ENCODE measurements at regions of chr7 and their contacts with region 1.

Region 1: GRCh38 chr7:1459522-1459892 is 237 bp upstream of the MICALL2 start:
- DNase-seq: peak; percentile 97 to 100
- H3K4me3 ChIP-seq: peak overlapping the region; percentile 89 to 95
- H3K27ac ChIP-seq: peak overlapping the region; percentile 85 to 95
- H3K4me1 ChIP-seq: peaks cover 16 to 44% of the 10 kb centered on the region in 2 donors
- H3K27me3 ChIP-seq: no peaks in the 10 kb centered on the region
- CTCF ChIP-seq: no peak

Region 2: DNA sequence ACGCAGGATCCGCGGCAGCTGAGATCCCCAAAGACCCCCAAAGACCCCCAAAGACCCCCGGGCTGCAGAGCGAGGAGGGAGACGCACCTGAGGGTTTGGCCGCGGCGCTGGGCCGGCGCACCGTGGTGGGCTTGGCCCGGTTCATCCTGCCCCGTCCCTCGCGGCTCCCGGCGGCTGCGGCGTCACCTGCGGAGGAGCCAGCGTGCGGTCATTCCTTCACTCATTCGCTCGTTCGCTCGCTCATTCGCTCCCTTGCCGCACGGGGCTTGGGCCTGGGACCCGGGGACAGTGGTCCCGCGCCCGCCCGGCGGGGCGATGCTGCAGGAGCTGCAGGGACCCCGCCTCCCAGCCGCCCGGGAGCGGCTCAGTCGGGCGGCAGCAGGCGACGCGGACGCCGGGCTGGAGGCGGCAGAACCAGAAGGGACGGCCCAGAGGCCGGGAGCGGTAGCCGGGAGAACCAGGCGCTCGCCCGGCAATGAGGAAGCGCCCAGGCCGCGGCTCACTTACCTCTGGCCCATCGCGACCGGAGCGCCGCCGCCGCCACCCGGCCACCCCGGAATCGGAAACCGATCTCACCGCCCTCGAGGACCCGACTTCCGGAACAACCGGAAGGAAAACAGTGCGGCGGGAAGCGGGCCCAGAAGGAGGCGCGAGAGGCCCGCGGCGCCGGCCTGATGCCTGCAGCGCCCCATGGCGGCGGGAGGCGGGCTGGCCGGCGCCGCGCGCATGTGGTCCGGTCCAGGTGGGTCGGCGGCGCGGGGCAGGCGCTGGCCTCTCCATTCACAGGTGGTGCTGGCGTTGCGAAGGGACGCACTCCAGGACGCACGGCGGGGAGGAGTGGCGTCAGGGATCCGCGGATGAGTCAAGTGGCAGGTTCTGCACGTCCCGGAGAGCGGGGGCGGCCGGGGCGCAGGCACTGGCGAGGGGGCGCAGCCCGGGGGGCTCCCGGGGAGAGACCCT is 44.6 kb after region 1 on chr7 and contains the start of gene INTS1:
- intact Hi-C with region 1: loop called (anchors 1 kb)
- DNase-seq: peak; percentile 42 to 93
- H3K4me3 ChIP-seq: peak within 1 kb of the TSS; percentile 79 to 93
- H3K27ac ChIP-seq: peak within 1 kb of the TSS; percentile 53 to 71
- H3K4me1 ChIP-seq: peaks cover 10% of the 10 kb centered on the region in 2 donors
- H3K27me3 ChIP-seq: no peaks in the 10 kb centered on the region
- CTCF ChIP-seq: peak; percentile 59 to 97 (median 71)
- total RNA-seq, gene INTS1: 80.7 TPM

Region 3: GRCh38 chr7:1532483-1533424 is 73.2 kb after region 1 on chr7:
- intact Hi-C with region 1: loop called (anchors 2 kb)
- DNase-seq: peak; percentile 88 to 96
- H3K4me3 ChIP-seq: peak overlapping the region; percentile 76 to 91
- H3K27ac ChIP-seq: peak overlapping the region; percentile 98 to 99
- H3K4me1 ChIP-seq: peaks cover 9 to 40% of the 10 kb centered on the region in 2 donors
- H3K27me3 ChIP-seq: no peaks in the 10 kb centered on the region
- CTCF ChIP-seq: no peak

Region 4: GRCh38 chr7:1537535-1538412 is 78.3 kb after region 1 on chr7:
- intact Hi-C with region 1: loop called (anchors 2 kb)
- DNase-seq: peak; percentile 90 to 99
- H3K4me3 ChIP-seq: peak overlapping the region; percentile 57 to 77
- H3K27ac ChIP-seq: peak overlapping the region; percentile 98 to 99
- H3K4me1 ChIP-seq: peaks cover 17 to 51% of the 10 kb centered on the region in 2 donors
- H3K27me3 ChIP-seq: no peaks in the 10 kb centered on the region
- CTCF ChIP-seq: no peak